Kidney (tissue), 22 donors: ENCODE measurements at regions of chr9 and their contacts with region 1.

Region 1: GRCh38 chr9:23326597-23326996 is 499.4 kb downstream of the ELAVL2 start:
- DNase-seq: no peak
- H3K4me3 ChIP-seq: no peak overlapping the region
- H3K27ac ChIP-seq: no peak overlapping the region
- H3K4me1 ChIP-seq: no peaks in the 10 kb centered on the region
- H3K27me3 ChIP-seq: no peaks in the 10 kb centered on the region
- CTCF ChIP-seq: no peak

Region 2: DNA sequence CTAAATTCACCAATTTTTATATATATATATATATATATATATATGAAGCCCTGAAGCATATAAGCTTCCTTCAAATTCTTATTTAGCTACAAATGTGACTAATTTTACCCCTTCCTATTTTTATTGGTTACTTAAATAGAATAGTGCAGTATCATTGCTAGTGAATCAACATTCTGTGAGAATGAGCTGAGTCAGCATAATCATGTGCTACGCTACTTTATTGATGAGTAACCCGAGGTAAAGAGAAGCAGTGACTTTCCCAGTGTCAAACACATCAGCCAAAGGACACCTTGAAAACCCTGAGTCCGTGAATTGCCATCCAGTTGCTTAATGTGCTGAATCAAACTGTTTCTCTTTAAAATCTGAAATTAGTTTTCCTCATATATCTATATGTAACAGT is 333.8 kb before region 1 on chr9:
- intact Hi-C with region 1: no loop called
- DNase-seq: no peak
- H3K4me3 ChIP-seq: no peak overlapping the region
- H3K27ac ChIP-seq: no peak overlapping the region
- H3K4me1 ChIP-seq: no peaks in the 10 kb centered on the region
- H3K27me3 ChIP-seq: no peaks in the 10 kb centered on the region
- CTCF ChIP-seq: no peak

Region 3: DNA sequence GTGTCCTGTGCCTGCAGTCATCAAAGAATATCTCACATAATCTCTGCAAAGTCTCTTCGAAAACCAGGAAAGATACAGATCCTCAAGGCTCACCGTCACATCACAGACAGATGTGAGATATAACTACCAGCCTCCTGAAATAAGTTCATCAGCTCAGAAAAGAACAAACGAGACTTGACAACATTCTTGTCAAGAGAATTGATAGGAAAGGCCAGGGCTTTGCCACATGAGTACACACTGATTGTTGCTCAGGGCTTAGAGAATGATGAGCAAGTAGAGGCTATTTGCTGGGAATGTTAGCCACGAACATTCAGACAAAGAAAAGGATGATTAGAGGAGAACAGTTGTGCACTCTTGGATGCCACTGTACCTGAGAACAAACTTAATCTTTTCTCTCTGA is 35.6 kb before region 1 on chr9:
- intact Hi-C with region 1: loop called (anchors 5 kb)
- DNase-seq: no peak
- H3K4me3 ChIP-seq: no peak overlapping the region
- H3K27ac ChIP-seq: no peak overlapping the region
- H3K4me1 ChIP-seq: no peaks in the 10 kb centered on the region
- H3K27me3 ChIP-seq: no peaks in the 10 kb centered on the region
- CTCF ChIP-seq: no peak